ENCODE measurements at regions of chr10 and their contacts with region 1.

Region 1: DNA sequence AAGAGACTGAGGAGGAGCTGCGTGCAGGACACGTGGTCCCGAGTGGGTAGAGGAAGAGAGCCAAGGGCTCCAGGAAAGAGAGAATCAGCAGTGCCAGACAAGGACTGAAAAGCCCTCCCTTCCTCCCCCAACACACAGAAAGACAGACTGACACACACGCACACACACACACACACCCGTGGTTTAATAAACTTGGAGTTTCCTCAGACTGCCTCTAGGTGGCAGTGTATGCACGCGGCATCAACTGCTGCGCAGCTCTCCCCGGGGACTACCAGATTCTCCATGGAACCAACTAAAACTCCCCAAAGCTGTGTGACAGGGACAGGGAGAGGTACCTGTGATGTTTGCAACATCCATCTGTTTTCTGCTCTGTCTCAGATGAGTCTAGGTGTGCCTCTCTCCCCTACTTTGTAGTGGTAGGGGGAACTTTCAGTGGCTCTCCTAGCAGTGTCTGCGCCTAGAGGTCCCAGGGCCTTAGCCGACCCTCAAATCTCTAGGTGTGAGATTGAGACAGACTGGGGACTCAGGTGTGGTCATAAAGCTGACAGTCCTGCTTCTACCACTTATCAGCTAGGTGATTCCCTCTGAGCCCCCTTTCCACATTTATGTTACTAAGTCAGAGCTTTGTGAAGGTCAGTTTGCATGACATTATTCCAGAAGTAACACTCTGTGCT is 9.3 kb upstream of the TSPAN14 start:
- DNase-seq: peak; percentile 63
- H3K4me3 ChIP-seq: no peak overlapping the region
- H3K27ac ChIP-seq: no peak overlapping the region
- H3K4me1 ChIP-seq: peaks cover 0 to 12% (median 0%) of the 10 kb centered on the region in 4 donors
- H3K27me3 ChIP-seq: no peaks in the 10 kb centered on the region
- CTCF ChIP-seq: peak; percentile 66 to 96 (median 88)
- EP300 ChIP-seq: no peak
- POLR2A ChIP-seq: no peak

Region 2: GRCh38 chr10:80382989-80383388 is 61.8 kb before region 1 on chr10:
- in situ Hi-C with region 1: loop called in 2 of 4 experiments (anchors 10 kb)
- intact Hi-C with region 1: no loop called
- DNase-seq: peak; percentile 44
- H3K4me3 ChIP-seq: no peak overlapping the region
- H3K27ac ChIP-seq: no peak overlapping the region
- H3K4me1 ChIP-seq: peaks cover 0 to 11% (median 4%) of the 10 kb centered on the region in 4 donors
- H3K27me3 ChIP-seq: no peaks in the 10 kb centered on the region
- CTCF ChIP-seq: peak; percentile 48 to 69 (median 57)
- EP300 ChIP-seq: no peak
- POLR2A ChIP-seq: no peak

Region 3: GRCh38 chr10:80504158-80504811 is 59.5 kb after region 1 on chr10:
- in situ Hi-C with region 1: loop called (anchors 5 to 10 kb)
- intact Hi-C with region 1: loop called (anchors 2 kb)
- DNase-seq: peak; percentile 48
- H3K4me3 ChIP-seq: peak overlapping the region in 1 of 4 donors; percentile 0
- H3K27ac ChIP-seq: peak overlapping the region; percentile 65 to 85 (median 82)
- H3K4me1 ChIP-seq: peaks cover 24 to 67% (median 45%) of the 10 kb centered on the region in 4 donors
- H3K27me3 ChIP-seq: no peaks in the 10 kb centered on the region
- CTCF ChIP-seq: no peak
- EP300 ChIP-seq: no peak
- POLR2A ChIP-seq: no peak

Measured in transverse colon (tissue), 4 donors.